ENCODE measurements at regions of chr3 and their contacts with region 1.

Region 1: DNA sequence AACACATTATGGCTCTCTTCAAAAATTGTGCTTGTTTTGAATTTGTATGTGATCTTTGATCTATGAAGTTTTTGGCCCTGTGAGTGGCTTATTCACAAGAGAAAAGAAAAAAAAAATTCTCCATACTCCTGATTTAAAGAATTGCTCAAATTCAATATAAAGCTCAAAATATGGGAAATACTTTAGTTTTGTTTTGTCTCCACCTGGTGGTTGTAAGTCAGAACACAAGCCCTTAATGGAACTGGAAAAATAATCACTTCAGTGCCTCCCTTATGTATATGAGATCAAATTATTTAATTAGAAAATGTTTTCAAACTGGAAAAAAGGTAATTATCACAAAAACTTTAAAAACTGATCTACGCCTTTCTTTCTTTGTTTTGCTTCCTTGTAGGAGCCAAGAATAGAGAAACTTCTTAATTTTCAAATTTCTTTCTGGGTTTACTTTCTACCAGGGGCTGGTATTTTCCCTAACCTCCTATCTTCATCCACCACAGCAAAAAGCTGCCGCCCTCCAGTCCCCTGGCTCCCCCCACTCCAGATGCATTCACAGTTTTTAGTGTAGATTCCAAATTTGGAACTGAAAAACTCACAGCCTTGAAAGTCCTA is 50.6 kb downstream of the SERP1 start:
- ATAC-seq: peak in 1 of 8 experiments; percentile 37
- H3K4me3 ChIP-seq: no peak overlapping the region
- H3K27ac ChIP-seq: no peak overlapping the region
- H3K4me1 ChIP-seq: no peaks in the 10 kb centered on the region

Region 2: DNA sequence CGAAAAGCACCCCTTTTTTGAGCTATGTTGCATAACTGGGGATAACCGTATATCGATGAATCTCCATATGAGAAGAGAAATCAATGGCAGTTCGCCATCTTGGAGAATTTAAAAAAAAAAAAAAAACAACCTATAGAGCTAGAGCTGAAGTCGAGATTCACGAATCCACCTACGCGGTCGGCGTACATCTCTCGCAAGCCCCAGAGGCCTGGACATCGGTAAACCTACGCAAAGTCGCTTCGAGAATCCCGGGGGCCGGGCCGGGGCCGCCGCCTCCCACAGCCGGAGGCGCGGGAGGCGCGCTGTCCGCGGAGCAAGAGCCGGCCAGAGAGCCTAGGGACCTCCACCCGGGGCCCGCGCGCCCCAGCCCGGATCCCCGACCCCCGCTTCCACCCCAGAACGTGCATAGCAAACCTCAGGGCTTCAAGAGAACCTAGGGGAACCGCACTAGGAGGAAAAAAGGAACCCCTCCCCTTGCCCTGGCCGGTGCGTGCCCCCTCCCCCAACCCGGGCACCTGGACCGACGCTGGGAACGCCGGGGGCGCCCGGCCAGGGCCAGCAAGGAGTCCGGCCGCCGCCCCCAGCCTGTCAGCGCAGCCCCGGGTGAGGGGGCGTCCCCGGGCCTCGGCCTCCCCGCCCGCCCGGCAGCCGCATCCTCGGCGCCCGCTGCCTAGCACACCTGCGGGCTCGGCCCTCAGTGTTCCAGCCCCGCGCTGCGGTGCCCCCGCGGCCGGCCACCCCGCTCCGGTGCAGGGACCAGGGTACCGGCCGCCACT is 525.5 kb before region 1 on chr3:
- in situ Hi-C with region 1: loop called in 1 of 9 experiments (anchors 25 kb)
- ATAC-seq: peak; percentile 44 to 70 (median 60)
- H3K4me3 ChIP-seq: peak overlapping the region; percentile 65 to 98 (median 92)
- H3K27ac ChIP-seq: peak overlapping the region; percentile 95 to 99
- H3K4me1 ChIP-seq: peaks cover 23 to 25% of the 10 kb centered on the region in 2 donors

Region 3: GRCh38 chr3:150216041-150216811 is 279.4 kb before region 1 on chr3:
- in situ Hi-C with region 1: no loop called
- ATAC-seq: peak in 5 of 8 experiments; percentile 32 to 71 (median 58)
- H3K4me3 ChIP-seq: no peak overlapping the region
- H3K27ac ChIP-seq: no peak overlapping the region
- H3K4me1 ChIP-seq: peaks cover 5 to 7% of the 10 kb centered on the region in 2 donors

Region 4: GRCh38 chr3:150227839-150228238 is 267.8 kb before region 1 on chr3:
- in situ Hi-C with region 1: loop called in 3 of 9 experiments (anchors 10 to 25 kb)
- ATAC-seq: peak; percentile 23 to 89 (median 52)
- H3K4me3 ChIP-seq: no peak overlapping the region
- H3K27ac ChIP-seq: no peak overlapping the region
- H3K4me1 ChIP-seq: no peaks in the 10 kb centered on the region

Region 5: DNA sequence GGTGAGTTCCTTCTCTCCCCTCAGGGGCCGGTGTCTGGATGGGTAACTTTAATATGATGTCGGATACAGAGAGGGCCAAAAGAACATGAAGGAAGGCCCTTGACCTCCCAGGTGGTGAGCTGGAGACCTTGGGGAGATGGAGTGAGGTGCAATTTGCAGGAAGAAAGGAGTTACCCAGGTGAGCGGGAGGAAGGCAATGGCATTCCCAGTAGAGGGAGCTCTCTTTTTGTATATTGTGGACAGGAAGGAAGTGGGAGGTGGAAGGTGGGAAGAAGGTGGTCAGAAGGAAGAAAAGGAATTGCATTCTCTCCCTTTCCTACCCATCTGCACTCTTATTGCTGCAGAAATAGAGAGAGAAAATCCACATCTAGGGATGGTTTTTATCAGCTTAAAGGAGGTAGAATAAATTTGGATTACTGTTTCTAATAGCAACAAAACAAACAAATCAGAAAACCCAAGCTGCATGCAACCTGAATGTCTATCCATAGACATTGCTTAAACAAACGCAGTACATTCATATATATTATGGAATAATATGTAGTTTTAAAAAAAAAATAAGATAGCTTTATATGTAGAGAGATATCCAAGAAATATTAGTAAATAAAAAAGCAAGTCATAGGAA is 256.6 kb before region 1 on chr3:
- in situ Hi-C with region 1: loop called in 4 of 9 experiments (anchors 10 to 25 kb)
- ATAC-seq: peak in 4 of 8 experiments; percentile 20 to 70 (median 56)
- H3K4me3 ChIP-seq: no peak overlapping the region
- H3K27ac ChIP-seq: no peak overlapping the region
- H3K4me1 ChIP-seq: no peaks in the 10 kb centered on the region

Region 6: GRCh38 chr3:150248116-150248887 is 247.4 kb before region 1 on chr3:
- in situ Hi-C with region 1: loop called in 3 of 9 experiments (anchors 10 to 25 kb)
- ATAC-seq: peak in 6 of 8 experiments; percentile 30 to 87 (median 42)
- H3K4me3 ChIP-seq: no peak overlapping the region
- H3K27ac ChIP-seq: no peak overlapping the region
- H3K4me1 ChIP-seq: peaks cover 28 to 33% of the 10 kb centered on the region in 2 donors

Measured in motor neuron (in vitro differentiated cells).